ENCODE measurements at regions of chr19 and their contacts with region 1.

Region 1: DNA sequence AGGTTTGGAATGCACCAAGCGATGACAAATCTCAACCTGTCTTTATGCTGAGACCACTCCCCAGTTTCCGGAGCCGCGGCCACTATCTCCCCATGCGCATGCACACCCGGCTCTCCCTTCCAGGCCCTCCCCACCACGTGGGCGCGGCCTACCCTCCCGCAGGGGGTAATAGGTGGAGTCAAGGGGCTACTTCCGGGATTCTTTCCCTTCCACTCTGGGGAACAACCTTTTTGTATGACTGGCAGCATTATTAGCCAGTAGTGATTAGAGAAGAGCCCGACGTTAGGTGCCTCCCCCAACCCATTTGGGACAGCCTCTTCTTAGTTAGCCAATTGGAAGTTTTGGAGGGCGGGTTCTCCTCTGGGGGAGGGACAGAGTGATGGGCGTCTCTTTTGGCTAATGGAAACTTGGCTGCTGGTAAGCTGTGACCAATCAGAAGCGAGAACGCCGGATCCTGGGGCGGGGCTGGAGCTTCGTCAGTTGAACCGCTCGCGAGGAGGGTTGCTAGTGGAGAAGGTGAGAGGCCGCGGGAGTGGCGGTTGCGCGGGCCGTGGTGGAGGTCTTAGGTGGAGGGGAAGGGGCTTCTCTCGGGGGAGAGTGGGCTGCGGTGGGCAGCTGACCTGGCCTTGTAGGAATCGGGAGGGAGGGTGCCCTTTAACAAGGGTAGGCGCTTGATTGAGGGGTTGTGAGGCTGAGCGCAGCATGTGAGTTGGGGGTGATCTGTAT is at the start of gene CCDC61:
- DNase-seq: peak; percentile 97
- H3K4me3 Mint-ChIP-seq: no peak within 1 kb of the TSS
- H3K27ac Mint-ChIP-seq: no peak within 1 kb of the TSS
- H3K4me1 Mint-ChIP-seq: peaks cover 17% of the 10 kb centered on the region
- H3K27me3 Mint-ChIP-seq: peaks cover 5% of the 10 kb centered on the region
- total RNA-seq, gene CCDC61: 28.4 to 30.5 TPM

Region 2: GRCh38 chr19:45886427-45887199 is 108.5 kb before region 1 on chr19:
- CTCF ChIA-PET with region 1: interaction called, 4 read pairs
- POLR2A ChIA-PET with region 1: no interaction called
- intact Hi-C with region 1: loop called (anchors 1 kb)
- DNase-seq: peak; percentile 95
- H3K4me3 Mint-ChIP-seq: peak overlapping the region; percentile 85
- H3K27ac Mint-ChIP-seq: peak overlapping the region; percentile 92
- H3K4me1 Mint-ChIP-seq: peaks cover 22% of the 10 kb centered on the region
- H3K27me3 Mint-ChIP-seq: no peaks in the 10 kb centered on the region

Region 3: GRCh38 chr19:45902651-45903625 is 92.2 kb before region 1 on chr19:
- CTCF ChIA-PET with region 1: interaction called, 3 read pairs
- POLR2A ChIA-PET with region 1: interaction called, 3 read pairs
- intact Hi-C with region 1: loop called (anchors 1 kb)
- DNase-seq: peak; percentile 100
- H3K4me3 Mint-ChIP-seq: peak overlapping the region; percentile 93
- H3K27ac Mint-ChIP-seq: peak overlapping the region; percentile 80
- H3K4me1 Mint-ChIP-seq: peaks cover 7% of the 10 kb centered on the region
- H3K27me3 Mint-ChIP-seq: no peaks in the 10 kb centered on the region

Region 4: DNA sequence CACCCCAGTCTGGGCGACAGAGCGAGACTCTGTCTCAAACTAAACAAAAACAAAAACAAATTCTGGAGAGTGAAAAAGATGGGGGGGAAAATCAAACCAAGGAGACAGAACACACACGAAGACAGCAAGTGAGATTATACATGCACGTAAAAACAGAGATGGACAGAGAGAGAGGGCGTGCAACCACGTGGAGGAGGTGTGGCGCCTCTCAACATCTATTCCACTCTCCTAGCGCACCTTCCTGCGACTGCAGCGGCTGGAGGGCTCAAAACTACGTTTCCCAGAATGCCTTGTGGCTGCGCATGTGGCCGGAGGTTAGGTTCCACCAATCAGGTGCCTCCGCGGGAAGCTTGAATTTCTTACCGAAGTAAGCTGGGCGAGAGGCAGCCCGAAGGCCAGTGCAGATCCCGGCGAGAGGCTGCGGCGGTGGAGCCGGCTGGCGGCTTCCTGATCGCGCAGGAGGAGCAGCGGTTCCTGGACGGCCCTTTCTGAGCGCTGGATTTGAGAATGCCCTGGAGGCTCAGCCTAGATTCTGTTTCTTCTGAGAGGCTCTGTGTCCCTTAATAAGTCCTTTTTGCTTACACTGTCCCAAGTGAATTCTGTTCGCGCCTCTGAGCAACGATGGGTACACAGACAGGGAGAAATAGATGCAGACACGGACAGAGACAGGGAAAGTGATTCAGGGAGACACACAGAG is 67.4 kb before region 1 on chr19:
- CTCF ChIA-PET with region 1: interaction called, 7 read pairs
- POLR2A ChIA-PET with region 1: no interaction called
- intact Hi-C with region 1: loop called (anchors 2 kb)
- DNase-seq: peak; percentile 95
- H3K4me3 Mint-ChIP-seq: peak overlapping the region; percentile 69
- H3K27ac Mint-ChIP-seq: peak overlapping the region; percentile 4
- H3K4me1 Mint-ChIP-seq: peaks cover 10% of the 10 kb centered on the region
- H3K27me3 Mint-ChIP-seq: peaks cover 11% of the 10 kb centered on the region

Region 5: DNA sequence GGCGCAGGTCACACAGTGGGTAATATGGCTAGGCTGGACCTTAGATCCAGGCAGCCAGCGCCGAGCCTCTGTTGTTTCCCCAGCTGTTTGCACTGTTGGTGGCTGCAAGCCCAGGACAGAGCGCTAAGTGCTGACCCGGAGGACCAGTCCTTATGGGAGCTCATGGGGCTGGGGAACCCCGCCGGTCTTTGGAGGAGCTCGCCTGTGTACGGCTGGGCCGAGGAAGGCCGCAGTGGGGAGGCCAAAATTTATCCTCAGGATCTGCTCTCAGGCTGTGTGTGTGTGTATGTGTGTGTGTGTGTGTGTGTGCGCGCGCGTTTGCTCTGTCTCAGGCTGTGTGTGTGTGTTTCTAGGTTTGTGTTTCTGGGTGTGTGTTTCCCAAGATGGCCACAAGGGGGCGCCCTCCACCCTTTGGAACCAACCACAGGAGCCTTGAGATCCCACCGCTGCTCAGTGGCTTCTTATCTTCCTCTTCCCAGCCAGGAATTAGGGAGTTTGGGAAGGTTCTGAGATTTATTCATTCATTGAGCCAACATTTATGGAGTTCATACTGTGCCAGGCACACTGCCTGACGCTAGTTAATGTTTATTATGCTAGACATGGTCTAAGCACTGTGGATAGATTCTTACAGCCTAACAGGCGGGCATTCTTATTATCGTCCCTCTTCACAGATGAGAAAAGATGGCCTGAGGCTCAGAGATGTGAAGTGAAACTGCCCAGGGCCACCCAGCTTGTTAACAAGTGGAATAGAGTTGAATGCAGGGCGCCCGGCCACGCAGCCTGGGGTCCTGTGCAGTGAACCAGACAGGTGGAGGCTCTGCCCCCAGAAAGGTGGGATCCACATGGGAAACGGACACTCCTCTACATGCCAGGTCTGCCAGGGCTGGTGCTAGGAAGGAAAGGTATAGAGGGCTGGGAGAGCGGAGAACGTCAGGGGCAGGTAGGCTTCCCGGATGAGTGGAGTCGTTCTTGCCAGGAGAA is 14.7 kb after region 1 on chr19:
- CTCF ChIA-PET with region 1: interaction called, 10 read pairs
- POLR2A ChIA-PET with region 1: no interaction called
- intact Hi-C with region 1: no loop called
- DNase-seq: peak; percentile 75
- H3K4me3 Mint-ChIP-seq: no peak overlapping the region
- H3K27ac Mint-ChIP-seq: no peak overlapping the region
- H3K4me1 Mint-ChIP-seq: peaks cover 5% of the 10 kb centered on the region
- H3K27me3 Mint-ChIP-seq: peaks cover 5% of the 10 kb centered on the region

Region 6: DNA sequence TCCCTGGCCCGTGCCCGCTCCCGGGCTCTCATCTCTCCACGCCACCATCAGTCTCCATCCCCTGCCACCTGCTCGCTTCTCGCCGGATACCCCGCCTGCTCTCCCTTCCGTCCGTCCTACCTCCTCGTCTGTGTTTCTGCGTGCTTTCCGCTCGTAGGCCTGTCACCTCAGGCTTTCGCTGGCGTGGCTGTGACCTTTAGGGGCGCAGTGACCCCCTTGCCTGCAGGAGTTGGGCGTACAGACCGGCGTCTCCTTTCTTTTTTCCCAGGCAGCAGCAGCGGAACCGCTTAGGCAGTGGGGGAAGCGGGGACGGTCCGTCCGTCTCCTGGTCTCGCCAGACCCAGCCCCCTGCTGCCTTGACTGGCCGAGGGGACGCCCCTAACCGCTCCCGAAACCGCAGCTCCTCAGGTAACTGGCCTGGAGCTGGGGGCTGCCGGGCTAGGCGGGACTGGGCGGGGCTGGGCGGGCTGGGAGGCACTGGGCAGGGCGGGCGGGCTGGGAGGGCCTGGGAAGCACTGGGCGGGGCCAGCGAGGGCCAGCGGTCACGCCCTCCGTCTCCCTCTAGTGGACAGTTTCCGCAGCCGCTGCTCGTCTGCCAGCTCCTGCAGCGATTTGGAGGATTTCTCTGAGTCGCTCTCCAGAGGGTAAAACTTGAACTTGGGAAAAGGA is 21.4 kb after region 1 on chr19:
- CTCF ChIA-PET with region 1: interaction called, 11 read pairs
- POLR2A ChIA-PET with region 1: no interaction called
- intact Hi-C with region 1: loop called (anchors 1 kb)
- DNase-seq: peak; percentile 88
- H3K4me3 Mint-ChIP-seq: peak overlapping the region; percentile 74
- H3K27ac Mint-ChIP-seq: no peak overlapping the region
- H3K4me1 Mint-ChIP-seq: peaks cover 17% of the 10 kb centered on the region
- H3K27me3 Mint-ChIP-seq: peaks cover 13% of the 10 kb centered on the region

Region 7: GRCh38 chr19:46346821-46347571 is 351.8 kb after region 1 on chr19 and contains the start of gene PPP5C:
- CTCF ChIA-PET with region 1: no interaction called
- POLR2A ChIA-PET with region 1: no interaction called
- intact Hi-C with region 1: loop called (anchors 2 kb)
- DNase-seq: peak; percentile 93
- H3K4me3 Mint-ChIP-seq: peak within 1 kb of the TSS; percentile 94
- H3K27ac Mint-ChIP-seq: peak within 1 kb of the TSS; percentile 90
- H3K4me1 Mint-ChIP-seq: peaks cover 47% of the 10 kb centered on the region
- H3K27me3 Mint-ChIP-seq: no peaks in the 10 kb centered on the region
- total RNA-seq, gene PPP5C: 76.9 to 82.5 TPM

Measured in activated CD4-positive, alpha-beta memory T cell treated with anti-CD3 and anti-CD28 coated beads for 36 hours (primary cell).